Upper lobe of right lung (tissue), 1 donor: ENCODE measurements at regions of chr3 and their contacts with region 1.

Region 1: GRCh38 chr3:38346587-38347410 is at the start of gene XYLB:
- DNase-seq: peak; percentile 95
- ATAC-seq: peak; percentile 99
- H3K4me3 ChIP-seq: peak within 1 kb of the TSS; percentile 76
- H3K27ac ChIP-seq: peak within 1 kb of the TSS; percentile 6
- H3K4me1 ChIP-seq: peaks cover 7% of the 10 kb centered on the region
- H3K27me3 ChIP-seq: no peaks in the 10 kb centered on the region
- CTCF ChIP-seq: peak; percentile 86
- total RNA-seq, gene XYLB: 3.1 TPM

Region 2: DNA sequence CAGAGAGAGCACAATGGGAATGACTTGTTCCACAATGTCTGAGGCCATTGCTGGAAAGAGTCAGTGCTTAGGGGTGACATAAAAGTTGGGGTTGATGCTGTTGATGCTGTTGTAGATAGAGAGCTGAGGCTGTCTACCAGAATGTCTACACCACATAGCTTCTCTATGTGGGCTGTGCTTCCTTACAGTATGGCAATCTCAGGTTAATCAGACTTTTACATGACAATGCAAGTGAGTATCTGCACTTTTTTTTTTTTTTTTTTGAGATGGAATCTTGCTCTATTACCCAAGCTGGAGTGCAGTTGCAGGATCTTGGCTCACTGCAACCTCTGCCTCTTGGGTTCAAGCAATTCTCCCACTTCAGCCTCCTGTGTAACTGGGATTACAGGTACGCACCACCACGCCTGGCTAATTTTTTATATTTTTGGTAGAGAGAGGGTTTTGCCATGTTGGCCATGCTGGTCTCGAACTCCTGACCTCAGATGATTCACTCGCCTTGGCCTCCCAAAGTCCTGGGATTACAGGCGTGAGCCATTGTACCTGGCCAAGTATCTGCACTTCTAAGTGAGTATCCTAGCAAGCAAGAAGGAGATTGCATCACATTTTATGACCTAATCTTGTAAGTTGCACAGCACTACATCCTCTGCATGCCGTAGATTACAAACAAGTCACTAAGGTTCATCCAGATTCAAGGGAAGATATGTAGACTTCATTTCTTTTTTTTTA is 279.1 kb before region 1 on chr3:
- intact Hi-C with region 1: no loop called
- DNase-seq: no peak
- ATAC-seq: peak; percentile 62
- H3K4me3 ChIP-seq: no peak overlapping the region
- H3K27ac ChIP-seq: no peak overlapping the region
- H3K4me1 ChIP-seq: no peaks in the 10 kb centered on the region
- H3K27me3 ChIP-seq: no peaks in the 10 kb centered on the region
- CTCF ChIP-seq: no peak

Region 3: GRCh38 chr3:38479431-38480092 is 132.8 kb after region 1 on chr3:
- intact Hi-C with region 1: loop called (anchors 5 kb)
- DNase-seq: no peak
- ATAC-seq: peak; percentile 89
- H3K4me3 ChIP-seq: no peak overlapping the region
- H3K27ac ChIP-seq: no peak overlapping the region
- H3K4me1 ChIP-seq: no peaks in the 10 kb centered on the region
- H3K27me3 ChIP-seq: no peaks in the 10 kb centered on the region
- CTCF ChIP-seq: peak; percentile 87